Activated CD8-positive, alpha-beta T cell treated with anti-CD3 and anti-CD28 coated beads for 36 hours (primary cell): ENCODE measurements at regions of chr14 and their contacts with region 1.

Region 1: GRCh38 chr14:24188251-24189058 is at the start of gene IPO4:
- DNase-seq: peak; percentile 96
- ATAC-seq: peak; percentile 95
- H3K4me3 Mint-ChIP-seq: peak within 1 kb of the TSS; percentile 92
- H3K27ac Mint-ChIP-seq: peak within 1 kb of the TSS; percentile 85
- H3K4me1 Mint-ChIP-seq: peaks cover 41% of the 10 kb centered on the region
- H3K27me3 Mint-ChIP-seq: no peaks in the 10 kb centered on the region
- CTCF ChIP-seq: no peak
- total RNA-seq, gene IPO4: 98.4 to 102 TPM

Region 2: DNA sequence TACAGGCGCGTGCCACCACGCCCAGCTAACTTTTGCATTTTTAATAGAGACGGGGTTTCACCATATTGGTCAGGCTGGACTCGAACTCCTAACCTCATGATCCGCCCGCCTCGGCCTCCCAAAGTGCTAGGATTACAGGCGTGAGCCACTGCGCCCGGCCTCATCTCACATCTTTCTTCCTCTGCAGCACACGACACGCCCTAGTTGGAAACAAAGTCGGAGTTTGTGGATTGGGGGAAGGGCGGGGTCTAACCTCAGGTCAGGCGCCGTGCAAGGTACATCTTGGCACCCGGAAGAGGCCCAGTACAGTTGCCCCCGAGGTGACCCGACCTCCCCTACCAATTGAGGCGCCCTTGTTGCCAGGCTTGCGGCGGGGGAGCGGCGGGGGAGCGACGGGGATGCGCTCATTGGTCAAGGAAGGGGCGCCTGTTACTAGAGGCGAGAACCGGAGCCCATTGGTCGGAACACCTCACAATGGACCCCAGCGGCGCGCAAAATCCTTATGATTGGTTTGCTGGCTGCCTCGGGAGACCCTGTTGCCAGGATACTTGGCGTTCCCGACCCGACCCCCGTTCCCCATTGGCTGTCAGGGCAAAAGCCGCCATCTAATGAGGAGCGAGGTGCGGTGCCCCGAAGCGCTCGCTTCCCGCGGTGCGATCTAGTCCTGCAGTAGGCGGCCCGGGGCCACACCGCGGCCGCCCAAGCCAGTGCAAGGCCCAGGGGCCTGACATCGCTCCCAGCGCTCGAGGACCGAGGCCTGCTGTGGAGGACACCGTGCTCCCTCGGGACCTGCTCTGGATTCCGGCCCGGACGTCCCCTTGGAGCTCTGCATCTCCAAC is 16.8 kb before region 1 on chr14 and contains the start of gene REC8:
- CTCF ChIA-PET with region 1: interaction called, 3 read pairs
- POLR2A ChIA-PET with region 1: interaction called, 163 read pairs
- intact Hi-C with region 1: no loop called
- DNase-seq: peak; percentile 87
- ATAC-seq: peak; percentile 89
- H3K4me3 Mint-ChIP-seq: peak within 1 kb of the TSS; percentile 77
- H3K27ac Mint-ChIP-seq: peak within 1 kb of the TSS; percentile 88
- H3K4me1 Mint-ChIP-seq: peaks cover 19% of the 10 kb centered on the region
- H3K27me3 Mint-ChIP-seq: no peaks in the 10 kb centered on the region
- CTCF ChIP-seq: no peak
- total RNA-seq, gene REC8: 25.0 to 32.9 TPM